Dendritic cell treated with granulocyte-macrophage colony-stimulating factor and Interleukin-4, amounts not matched to agents 40 ng/mL and 50 ng/mL, for 4 days (primary cell): ENCODE measurements at regions of chr1 and their contacts with region 1.

Region 1: DNA sequence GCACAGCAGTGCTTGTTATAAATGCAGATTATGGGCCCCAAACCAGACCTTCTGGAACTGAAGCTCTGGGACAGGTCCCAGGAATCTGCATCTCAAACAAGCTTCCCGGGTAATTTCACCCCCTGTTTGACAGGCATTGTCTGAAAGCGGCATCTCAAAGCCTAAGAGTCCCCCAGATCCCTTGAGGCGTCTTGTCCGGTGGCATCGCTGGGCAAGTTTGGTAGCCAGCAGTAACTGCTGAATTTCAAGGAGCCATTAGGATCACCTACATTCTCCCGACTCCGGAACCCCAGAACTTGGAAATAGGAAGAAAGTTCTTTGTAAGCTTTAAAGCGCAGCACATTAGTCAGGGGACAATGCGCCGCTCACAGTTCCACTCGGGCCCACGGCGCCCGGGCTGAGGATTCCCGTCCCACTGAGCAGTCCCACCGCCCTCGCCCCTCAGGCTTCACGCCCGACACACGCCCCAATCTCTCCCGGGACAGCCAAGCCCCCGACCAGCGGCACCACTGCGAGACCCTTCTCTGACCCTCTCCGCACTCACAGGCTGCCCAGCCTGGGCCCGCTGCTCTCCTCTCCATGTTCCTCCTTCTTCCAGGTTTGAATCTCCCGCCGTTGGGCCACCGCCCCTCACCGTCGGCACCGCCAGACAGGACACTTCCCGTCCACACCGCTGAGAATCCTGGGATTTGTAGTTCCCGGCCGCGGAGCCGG is at the start of gene IQGAP3:
- H3K4me3 Mint-ChIP-seq: peak within 1 kb of the TSS; percentile 76
- H3K27ac Mint-ChIP-seq: peak within 1 kb of the TSS; percentile 33
- H3K4me1 Mint-ChIP-seq: peaks cover 33% of the 10 kb centered on the region
- H3K27me3 Mint-ChIP-seq: peaks cover 6% of the 10 kb centered on the region

Region 2: GRCh38 chr1:156480411-156481192 is 91.5 kb before region 1 on chr1:
- intact Hi-C with region 1: loop called (anchors 5 kb)
- H3K4me3 Mint-ChIP-seq: no peak overlapping the region
- H3K27ac Mint-ChIP-seq: peak overlapping the region; percentile 78
- H3K4me1 Mint-ChIP-seq: peaks cover 61% of the 10 kb centered on the region
- H3K27me3 Mint-ChIP-seq: no peaks in the 10 kb centered on the region

Region 3: DNA sequence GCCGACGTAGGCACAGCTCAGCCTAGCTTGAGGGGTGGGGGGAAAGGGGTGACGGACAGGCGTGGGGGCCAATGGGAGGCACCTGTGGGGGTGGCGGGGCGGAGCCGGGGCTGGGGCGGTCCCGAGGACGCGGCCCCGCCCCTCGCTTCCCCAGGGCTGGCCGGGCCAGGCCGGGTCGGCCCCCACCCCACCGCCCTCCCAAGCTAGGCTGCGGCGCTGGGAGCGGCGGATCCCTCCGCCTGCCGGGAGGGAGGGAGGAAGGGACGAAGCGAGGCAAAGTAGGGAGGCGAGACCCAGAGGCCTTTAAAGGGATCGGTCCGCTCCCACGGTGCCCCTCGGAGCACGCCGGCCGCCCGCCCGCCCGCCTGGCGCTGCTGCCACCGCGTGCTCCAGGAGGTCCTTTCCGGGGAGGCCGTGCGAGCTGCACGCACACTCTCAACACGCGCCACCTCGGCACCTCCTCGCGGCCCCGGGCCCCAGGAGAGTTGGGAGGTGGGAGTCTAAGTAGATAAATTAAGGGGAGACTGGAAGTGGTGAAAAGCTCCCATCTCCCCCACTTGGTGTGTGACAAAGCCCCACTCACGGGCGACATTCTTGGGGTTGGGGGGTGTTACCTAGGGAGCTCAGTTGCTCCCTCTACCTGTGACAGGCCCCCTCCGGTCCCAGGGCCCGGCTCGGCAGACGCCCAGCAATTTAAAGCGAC is 71.2 kb before region 1 on chr1:
- intact Hi-C with region 1: loop called (anchors 5 kb)
- H3K4me3 Mint-ChIP-seq: peak overlapping the region; percentile 89
- H3K27ac Mint-ChIP-seq: peak overlapping the region; percentile 100
- H3K4me1 Mint-ChIP-seq: peaks cover 77% of the 10 kb centered on the region
- H3K27me3 Mint-ChIP-seq: no peaks in the 10 kb centered on the region

Region 4: DNA sequence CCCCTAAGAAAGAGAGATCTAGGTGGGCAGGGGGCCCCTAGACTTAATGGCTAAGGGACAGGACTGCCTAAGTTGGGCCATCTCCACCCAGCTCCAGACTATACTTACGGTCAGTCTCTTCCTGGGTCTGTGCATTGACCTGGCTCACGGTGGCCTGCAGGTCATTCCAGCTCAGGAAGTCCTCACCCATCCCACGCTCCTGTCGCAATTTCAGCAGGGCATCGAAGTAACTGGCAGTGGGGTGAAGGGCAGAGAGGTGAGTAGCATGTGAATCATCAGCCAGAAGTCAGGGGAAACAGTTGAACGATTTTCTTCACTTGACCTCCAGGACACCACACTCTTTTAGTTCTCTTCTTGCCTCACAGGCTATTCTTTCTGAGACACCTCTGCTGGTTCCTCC is 20.2 kb before region 1 on chr1:
- intact Hi-C with region 1: no loop called
- H3K4me3 Mint-ChIP-seq: no peak overlapping the region
- H3K27ac Mint-ChIP-seq: no peak overlapping the region
- H3K4me1 Mint-ChIP-seq: peaks cover 41% of the 10 kb centered on the region
- H3K27me3 Mint-ChIP-seq: peaks cover 1% of the 10 kb centered on the region